ENCODE measurements at regions of chr14 and their contacts with region 1.

Region 1: GRCh38 chr14:54652188-54652587 is 85.3 kb downstream of the SAMD4A start:
- DNase-seq: peak; percentile 73 to 96
- H3K4me3 ChIP-seq: peak overlapping the region; percentile 43 to 51
- H3K27ac ChIP-seq: peak overlapping the region; percentile 86 to 90
- H3K4me1 ChIP-seq: peaks cover 0 to 56% of the 10 kb centered on the region in 2 donors
- H3K27me3 ChIP-seq: no peaks in the 10 kb centered on the region
- CTCF ChIP-seq: no peak

Region 2: DNA sequence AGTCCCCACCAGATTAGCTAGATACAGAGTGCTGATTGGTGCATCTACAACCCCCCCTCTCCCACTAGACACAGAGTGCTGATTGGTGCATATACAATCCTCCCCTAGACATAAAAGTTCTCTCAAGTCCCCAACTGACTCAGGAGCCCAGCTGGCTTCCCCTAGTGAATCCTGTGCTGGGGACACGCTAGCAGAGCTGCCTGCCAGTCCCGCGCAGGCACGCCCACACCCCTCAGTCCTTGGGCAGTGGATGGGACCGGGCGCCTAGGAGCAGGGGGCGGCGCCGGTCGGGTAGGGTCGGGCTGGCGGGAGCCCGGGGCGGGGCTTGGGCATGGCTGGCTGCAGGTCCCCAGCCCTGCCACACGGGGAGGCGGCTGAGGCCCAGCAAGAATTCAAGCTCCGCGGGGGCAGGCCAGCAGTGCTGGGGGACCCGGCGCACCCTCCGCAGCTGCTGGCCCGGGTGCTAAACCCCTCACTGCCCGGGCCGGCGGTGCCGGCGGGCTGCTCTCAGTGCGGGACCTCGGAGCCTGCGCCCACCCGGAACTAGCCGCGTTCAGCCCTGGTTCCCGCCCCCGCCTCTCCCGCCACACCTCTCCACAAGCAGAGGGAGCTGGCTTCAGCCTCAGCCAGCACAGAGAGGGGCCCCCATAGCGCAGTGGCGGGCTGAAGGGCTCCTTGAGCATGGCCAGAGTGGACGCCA is 1434.7 kb before region 1 on chr14:
- intact Hi-C with region 1: no loop called
- DNase-seq: peak; percentile 21 to 81
- H3K4me3 ChIP-seq: peak overlapping the region; percentile 82 to 87
- H3K27ac ChIP-seq: peak overlapping the region; percentile 27 to 59
- H3K4me1 ChIP-seq: no peaks in the 10 kb centered on the region
- H3K27me3 ChIP-seq: no peaks in the 10 kb centered on the region
- CTCF ChIP-seq: peak; percentile 49 to 61 (median 57)

Region 3: GRCh38 chr14:54566410-54567223 is 85.6 kb before region 1 on chr14 and contains the start of gene SAMD4A:
- intact Hi-C with region 1: loop called (anchors 2 kb)
- DNase-seq: peak in 1 of 2 donors; percentile 85
- H3K4me3 ChIP-seq: peak within 1 kb of the TSS; percentile 87 to 91
- H3K27ac ChIP-seq: peak within 1 kb of the TSS; percentile 99 to 100
- H3K4me1 ChIP-seq: peaks cover 0 to 19% of the 10 kb centered on the region in 2 donors
- H3K27me3 ChIP-seq: no peaks in the 10 kb centered on the region
- CTCF ChIP-seq: peak; percentile 23 to 34 (median 25)
- total RNA-seq, gene SAMD4A: 66.0 TPM

Region 4: DNA sequence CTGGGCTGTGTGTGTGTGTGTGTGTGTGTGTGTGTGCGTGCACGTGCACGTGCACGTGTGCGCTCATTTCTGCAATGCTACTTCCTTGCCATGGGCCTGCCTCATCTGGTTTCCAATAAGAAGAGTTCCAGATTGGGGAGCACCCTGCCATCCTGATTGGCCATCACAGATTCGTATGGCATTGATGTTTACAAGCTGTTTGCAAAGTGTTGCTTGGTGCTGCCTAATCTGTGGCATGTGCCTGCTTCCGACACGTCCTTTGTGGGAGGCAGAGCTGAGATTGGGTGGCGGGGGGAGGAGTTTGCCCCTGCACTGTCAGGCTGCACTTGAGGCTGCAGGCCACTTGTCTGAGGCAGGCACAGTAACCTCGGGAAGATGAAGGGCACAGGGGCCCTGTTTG is 46.0 kb before region 1 on chr14:
- intact Hi-C with region 1: loop called (anchors 5 kb)
- DNase-seq: no peak
- H3K4me3 ChIP-seq: no peak overlapping the region
- H3K27ac ChIP-seq: peak overlapping the region; percentile 66 to 69
- H3K4me1 ChIP-seq: peaks cover 11 to 36% of the 10 kb centered on the region in 2 donors
- H3K27me3 ChIP-seq: no peaks in the 10 kb centered on the region
- CTCF ChIP-seq: no peak

Region 5: DNA sequence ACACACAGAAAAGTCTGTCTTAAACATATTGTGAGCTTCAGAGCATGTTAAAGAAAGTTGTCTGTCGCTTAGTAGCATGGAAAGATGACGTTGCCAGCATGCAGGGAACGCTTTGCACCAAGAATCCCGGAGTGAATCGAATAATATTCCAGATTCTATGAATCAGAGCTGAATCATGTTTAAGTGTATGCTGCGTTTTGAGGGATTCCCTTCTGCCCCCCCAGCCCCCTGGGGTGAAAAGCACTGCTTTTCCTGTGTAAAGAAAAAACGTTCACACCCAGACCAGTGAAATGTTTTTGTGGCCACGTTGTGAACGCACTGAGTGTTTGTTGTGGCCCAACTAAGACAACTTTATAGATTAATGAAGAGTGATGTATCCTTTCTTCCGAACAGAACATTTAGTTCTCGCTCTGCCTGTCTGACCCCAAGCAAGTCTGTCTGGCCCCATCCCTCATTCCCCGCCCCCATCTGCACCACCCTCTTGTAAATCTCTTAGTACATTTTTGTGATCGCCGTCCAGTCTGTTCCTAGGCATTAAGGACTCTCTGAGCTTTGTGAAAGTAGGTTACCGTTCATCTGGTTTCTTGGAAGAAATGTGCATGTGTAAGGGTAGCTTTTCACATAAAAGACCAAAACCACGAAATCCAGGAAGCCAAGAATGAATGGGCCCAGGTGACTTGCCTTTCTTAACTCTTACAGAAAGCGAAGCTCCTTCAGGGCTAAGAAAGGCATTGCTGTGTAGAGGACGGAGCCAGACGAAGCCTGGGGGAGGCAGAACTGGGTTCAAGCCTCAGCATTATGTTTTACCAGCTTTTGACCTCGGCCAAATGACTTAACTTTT is 17.8 kb after region 1 on chr14:
- intact Hi-C with region 1: loop called (anchors 2 kb)
- DNase-seq: peak in 1 of 2 donors; percentile 74
- H3K4me3 ChIP-seq: no peak overlapping the region
- H3K27ac ChIP-seq: peak overlapping the region; percentile 64 to 87
- H3K4me1 ChIP-seq: peaks cover 17 to 63% of the 10 kb centered on the region in 2 donors
- H3K27me3 ChIP-seq: no peaks in the 10 kb centered on the region
- CTCF ChIP-seq: no peak

Region 6: GRCh38 chr14:54686219-54686870 is 34.2 kb after region 1 on chr14:
- intact Hi-C with region 1: loop called (anchors 2 kb)
- DNase-seq: peak in 1 of 2 donors; percentile 92
- H3K4me3 ChIP-seq: peak overlapping the region in 1 of 2 donors; percentile 2
- H3K27ac ChIP-seq: peak overlapping the region; percentile 96 to 97
- H3K4me1 ChIP-seq: peaks cover 15 to 85% of the 10 kb centered on the region in 2 donors
- H3K27me3 ChIP-seq: no peaks in the 10 kb centered on the region
- CTCF ChIP-seq: no peak

Region 7: GRCh38 chr14:54773171-54773975 is 121.2 kb after region 1 on chr14:
- intact Hi-C with region 1: loop called (anchors 2 kb)
- DNase-seq: peak; percentile 78 to 98
- H3K4me3 ChIP-seq: peak overlapping the region in 1 of 2 donors; percentile 33
- H3K27ac ChIP-seq: peak overlapping the region; percentile 96 to 97
- H3K4me1 ChIP-seq: peaks cover 27 to 62% of the 10 kb centered on the region in 2 donors
- H3K27me3 ChIP-seq: no peaks in the 10 kb centered on the region
- CTCF ChIP-seq: peak; percentile 70 to 91 (median 72)

Measured in ascending aorta (tissue), 2 donors.